B cell (primary cell): ENCODE measurements at regions of chr10 and their contacts with region 1.

Region 1: GRCh38 chr10:103367782-103368518 is at the start of gene TAF5:
- DNase-seq: peak; percentile 95
- ATAC-seq: peak; percentile 71
- H3K4me3 ChIP-seq: peak within 1 kb of the TSS; percentile 59 to 93 (median 88)
- H3K4me3 Mint-ChIP-seq: peak within 1 kb of the TSS; percentile 98
- H3K27ac ChIP-seq: peak within 1 kb of the TSS; percentile 62 to 81
- H3K27ac Mint-ChIP-seq: peak within 1 kb of the TSS; percentile 97
- H3K4me1 ChIP-seq: peaks cover 3 to 16% of the 10 kb centered on the region in 2 donors
- H3K4me1 Mint-ChIP-seq: peaks cover 10% of the 10 kb centered on the region
- H3K27me3 ChIP-seq: no peaks in the 10 kb centered on the region
- H3K27me3 Mint-ChIP-seq: no peaks in the 10 kb centered on the region
- CTCF ChIP-seq: no peak
- total RNA-seq, gene TAF5: 5.5 and 6.5 TPM in 2 replicates

Region 2: GRCh38 chr10:102743588-102744373 is 624.2 kb before region 1 on chr10 and contains the start of gene WBP1L:
- CTCF ChIA-PET with region 1: no interaction called
- POLR2A ChIA-PET with region 1: interaction called, 3 read pairs
- intact Hi-C with region 1: loop called (anchors 10 kb)
- DNase-seq: peak; percentile 98
- ATAC-seq: peak; percentile 95
- H3K4me3 ChIP-seq: peak within 1 kb of the TSS; percentile 70 to 96 (median 89)
- H3K4me3 Mint-ChIP-seq: peak within 1 kb of the TSS; percentile 89
- H3K27ac ChIP-seq: peak within 1 kb of the TSS; percentile 58 to 86
- H3K27ac Mint-ChIP-seq: peak within 1 kb of the TSS; percentile 88
- H3K4me1 ChIP-seq: peaks cover 24 to 25% of the 10 kb centered on the region in 2 donors
- H3K4me1 Mint-ChIP-seq: peaks cover 42% of the 10 kb centered on the region
- H3K27me3 ChIP-seq: peaks cover 0 to 2% (median 0%) of the 10 kb centered on the region in 4 experiments
- H3K27me3 Mint-ChIP-seq: no peaks in the 10 kb centered on the region
- CTCF ChIP-seq: peak; percentile 16
- total RNA-seq, gene WBP1L: 43.2 and 44.3 TPM in 2 replicates

Region 3: GRCh38 chr10:103192451-103193106 is 175.4 kb before region 1 on chr10:
- CTCF ChIA-PET with region 1: no interaction called
- POLR2A ChIA-PET with region 1: no interaction called
- intact Hi-C with region 1: loop called (anchors 1 kb)
- DNase-seq: peak; percentile 75
- ATAC-seq: peak; percentile 56
- H3K4me3 ChIP-seq: peak overlapping the region; percentile 70 to 93 (median 92)
- H3K4me3 Mint-ChIP-seq: peak overlapping the region; percentile 99
- H3K27ac ChIP-seq: peak overlapping the region; percentile 86 to 87
- H3K27ac Mint-ChIP-seq: peak overlapping the region; percentile 98
- H3K4me1 ChIP-seq: peaks cover 20 to 29% of the 10 kb centered on the region in 2 donors
- H3K4me1 Mint-ChIP-seq: peaks cover 40% of the 10 kb centered on the region
- H3K27me3 ChIP-seq: no peaks in the 10 kb centered on the region
- H3K27me3 Mint-ChIP-seq: no peaks in the 10 kb centered on the region
- CTCF ChIP-seq: no peak

Region 4: DNA sequence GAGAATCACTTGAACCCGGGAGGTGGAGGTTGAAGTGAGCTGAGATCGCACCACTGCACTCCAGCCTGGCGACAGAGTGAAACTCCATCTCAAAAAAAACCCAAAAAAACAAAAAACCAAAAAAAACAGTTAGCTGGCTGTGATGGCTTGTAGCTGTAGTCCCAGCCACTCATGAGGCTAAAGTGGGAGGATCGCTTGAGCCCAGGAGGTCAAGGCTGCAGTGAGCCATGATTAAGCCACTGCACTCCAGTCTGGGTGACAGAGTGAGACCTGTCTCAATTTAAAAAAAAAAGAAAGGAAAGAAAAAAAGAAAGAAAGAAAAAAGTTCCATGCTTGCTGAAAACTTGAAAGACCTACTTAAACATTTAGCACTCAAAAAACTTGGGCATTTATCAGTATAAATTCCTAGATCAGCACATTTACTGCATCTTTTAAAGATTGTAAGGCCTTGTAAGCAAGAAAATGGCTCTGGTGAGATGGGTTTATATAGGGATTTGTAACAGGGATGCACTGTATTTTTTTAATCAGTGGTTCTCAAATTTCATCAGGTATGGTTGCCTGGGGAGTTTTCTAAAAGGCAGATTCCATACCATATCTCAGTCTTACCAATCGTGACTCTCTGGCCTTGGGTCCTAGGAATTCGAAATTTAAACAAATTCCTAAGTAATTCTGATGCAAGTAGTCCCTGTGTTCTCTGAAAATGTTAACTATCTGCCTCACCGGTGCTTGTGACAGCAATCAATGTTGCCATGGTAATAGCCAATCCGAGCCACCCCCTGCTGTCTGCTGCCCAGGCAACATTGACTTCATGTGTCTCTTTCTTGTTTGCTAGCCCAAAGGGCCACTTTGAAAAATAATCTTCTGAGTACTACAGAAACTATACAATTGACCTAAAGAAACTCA is 163.3 kb before region 1 on chr10:
- CTCF ChIA-PET with region 1: no interaction called
- POLR2A ChIA-PET with region 1: no interaction called
- intact Hi-C with region 1: no loop called
- DNase-seq: no peak
- ATAC-seq: no peak
- H3K4me3 ChIP-seq: no peak overlapping the region
- H3K4me3 Mint-ChIP-seq: no peak overlapping the region
- H3K27ac ChIP-seq: no peak overlapping the region
- H3K27ac Mint-ChIP-seq: no peak overlapping the region
- H3K4me1 ChIP-seq: no peaks in the 10 kb centered on the region
- H3K4me1 Mint-ChIP-seq: no peaks in the 10 kb centered on the region
- H3K27me3 ChIP-seq: no peaks in the 10 kb centered on the region
- H3K27me3 Mint-ChIP-seq: peaks cover 6% of the 10 kb centered on the region
- CTCF ChIP-seq: no peak

Region 5: DNA sequence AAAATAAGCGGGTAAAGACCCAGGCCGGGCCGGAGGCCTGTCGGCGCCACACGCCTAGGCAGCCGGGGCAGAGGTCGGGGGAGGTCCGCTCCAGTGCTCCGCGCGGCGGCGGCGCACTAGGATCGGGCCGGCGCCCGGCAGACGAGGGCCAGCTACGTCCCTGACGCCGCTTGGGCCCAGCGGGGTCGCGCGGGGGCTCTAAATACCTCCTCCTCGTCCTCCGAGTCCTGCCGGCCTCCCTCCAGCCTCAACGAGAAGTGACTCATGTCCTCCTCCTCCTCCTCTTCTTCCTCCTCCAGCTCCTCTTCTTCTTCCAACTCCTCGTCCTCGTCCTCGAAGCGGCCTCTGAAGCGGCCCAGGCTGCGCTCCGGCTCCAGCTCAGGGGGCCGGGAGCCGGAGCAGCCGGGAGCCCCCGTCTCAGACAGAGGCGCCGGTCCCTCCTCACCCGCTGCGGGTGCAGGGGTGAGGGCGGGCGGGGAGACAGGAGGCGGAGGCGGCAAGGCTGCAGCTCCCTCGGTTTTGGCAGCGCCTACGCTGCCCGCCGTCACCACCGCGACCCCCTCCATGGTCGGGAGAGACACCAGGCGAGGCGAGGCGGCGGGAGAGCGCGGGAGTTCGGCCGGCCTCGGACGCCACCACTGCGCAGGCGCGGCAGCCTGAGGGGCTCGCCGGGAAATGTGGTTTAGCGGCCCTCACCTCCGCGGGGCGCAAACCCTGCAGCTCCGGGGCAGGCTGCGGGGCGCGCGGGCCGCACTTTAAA is 17.3 kb before region 1 on chr10 and contains the start of gene PCGF6:
- CTCF ChIA-PET with region 1: interaction called, 3 read pairs
- POLR2A ChIA-PET with region 1: interaction called, 7 read pairs
- intact Hi-C with region 1: loop called (anchors 1 kb)
- DNase-seq: peak; percentile 86
- ATAC-seq: peak; percentile 86
- H3K4me3 ChIP-seq: peak within 1 kb of the TSS; percentile 71 to 85 (median 80)
- H3K4me3 Mint-ChIP-seq: peak within 1 kb of the TSS; percentile 89
- H3K27ac ChIP-seq: peak within 1 kb of the TSS; percentile 25 to 66
- H3K27ac Mint-ChIP-seq: peak within 1 kb of the TSS; percentile 82
- H3K4me1 ChIP-seq: peaks cover 9 to 13% of the 10 kb centered on the region in 2 donors
- H3K4me1 Mint-ChIP-seq: peaks cover 6% of the 10 kb centered on the region
- H3K27me3 ChIP-seq: no peaks in the 10 kb centered on the region
- H3K27me3 Mint-ChIP-seq: no peaks in the 10 kb centered on the region
- CTCF ChIP-seq: no peak
- total RNA-seq, gene PCGF6: 7.4 and 8.9 TPM in 2 replicates

Region 6: GRCh38 chr10:103396064-103396788 is 28.3 kb after region 1 on chr10 and contains the starts of genes ATP5MK and PDCD11:
- CTCF ChIA-PET with region 1: interaction called, 4 read pairs
- POLR2A ChIA-PET with region 1: interaction called, 8 read pairs
- intact Hi-C with region 1: loop called (anchors 1 kb)
- DNase-seq: peak; percentile 95
- ATAC-seq: peak; percentile 98
- H3K4me3 ChIP-seq: peak within 1 kb of the TSS; percentile 68 to 92 (median 76)
- H3K4me3 Mint-ChIP-seq: peak within 1 kb of the TSS; percentile 97
- H3K27ac ChIP-seq: peak within 1 kb of the TSS; percentile 38 to 64
- H3K27ac Mint-ChIP-seq: peak within 1 kb of the TSS; percentile 89
- H3K4me1 ChIP-seq: peaks cover 22 to 23% of the 10 kb centered on the region in 2 donors
- H3K4me1 Mint-ChIP-seq: peaks cover 44% of the 10 kb centered on the region
- H3K27me3 ChIP-seq: no peaks in the 10 kb centered on the region
- H3K27me3 Mint-ChIP-seq: no peaks in the 10 kb centered on the region
- CTCF ChIP-seq: no peak
- total RNA-seq, gene ATP5MK: 96.6 and 107 TPM in 2 replicates
- total RNA-seq, gene PDCD11: 36.4 and 42.3 TPM in 2 replicates

Region 7: GRCh38 chr10:103470761-103471653 is 103.1 kb after region 1 on chr10:
- CTCF ChIA-PET with region 1: interaction called, 3 read pairs
- POLR2A ChIA-PET with region 1: interaction called, 4 read pairs
- intact Hi-C with region 1: loop called (anchors 1 kb)
- DNase-seq: peak; percentile 85
- ATAC-seq: peak; percentile 78
- H3K4me3 ChIP-seq: peak overlapping the region in 3 of 5 experiments; percentile 15 to 35 (median 31)
- H3K4me3 Mint-ChIP-seq: peak overlapping the region; percentile 79
- H3K27ac ChIP-seq: peak overlapping the region; percentile 69 to 78
- H3K27ac Mint-ChIP-seq: peak overlapping the region; percentile 96
- H3K4me1 ChIP-seq: peaks cover 40 to 70% of the 10 kb centered on the region in 2 donors
- H3K4me1 Mint-ChIP-seq: peaks cover 71% of the 10 kb centered on the region
- H3K27me3 ChIP-seq: no peaks in the 10 kb centered on the region
- H3K27me3 Mint-ChIP-seq: no peaks in the 10 kb centered on the region
- CTCF ChIP-seq: no peak

Region 8: DNA sequence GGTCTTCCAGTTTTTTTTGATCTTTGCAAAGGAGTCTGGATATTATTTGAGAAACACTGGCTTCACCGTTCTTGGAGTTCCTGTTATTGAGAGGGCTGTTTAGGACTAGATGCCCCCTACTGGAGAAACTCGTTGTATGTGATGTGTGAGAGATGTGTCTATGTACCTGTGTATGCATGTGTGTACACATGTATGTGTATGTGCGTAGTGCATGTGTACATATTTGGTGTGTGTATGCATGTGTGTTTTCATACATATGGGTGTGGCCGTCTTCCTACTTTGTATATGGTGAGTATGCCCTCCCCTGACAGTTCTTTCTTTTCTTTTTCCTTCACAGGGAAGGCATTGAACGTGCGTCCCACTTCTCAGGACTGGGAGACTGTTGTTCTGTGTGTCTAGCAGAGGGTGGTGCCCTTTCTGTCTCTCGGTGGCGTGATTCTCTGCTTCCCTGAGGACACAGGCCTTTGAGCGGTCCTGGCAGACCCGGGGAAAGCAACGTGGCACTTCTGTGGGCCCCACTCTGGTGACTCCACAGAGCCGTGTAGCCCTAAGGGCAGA is 114.1 kb after region 1 on chr10:
- CTCF ChIA-PET with region 1: no interaction called
- POLR2A ChIA-PET with region 1: no interaction called
- intact Hi-C with region 1: no loop called
- DNase-seq: peak; percentile 82
- ATAC-seq: peak; percentile 81
- H3K4me3 ChIP-seq: no peak overlapping the region
- H3K4me3 Mint-ChIP-seq: no peak overlapping the region
- H3K27ac ChIP-seq: no peak overlapping the region
- H3K27ac Mint-ChIP-seq: peak overlapping the region; percentile 7
- H3K4me1 ChIP-seq: peaks cover 0 to 13% of the 10 kb centered on the region in 2 donors
- H3K4me1 Mint-ChIP-seq: peaks cover 12% of the 10 kb centered on the region
- H3K27me3 ChIP-seq: no peaks in the 10 kb centered on the region
- H3K27me3 Mint-ChIP-seq: no peaks in the 10 kb centered on the region
- CTCF ChIP-seq: peak; percentile 81

Region 9: GRCh38 chr10:103712570-103713498 is 344.9 kb after region 1 on chr10:
- CTCF ChIA-PET with region 1: no interaction called
- POLR2A ChIA-PET with region 1: no interaction called
- intact Hi-C with region 1: no loop called
- DNase-seq: peak; percentile 84
- ATAC-seq: peak; percentile 92
- H3K4me3 ChIP-seq: no peak overlapping the region
- H3K4me3 Mint-ChIP-seq: no peak overlapping the region
- H3K27ac ChIP-seq: no peak overlapping the region
- H3K27ac Mint-ChIP-seq: no peak overlapping the region
- H3K4me1 ChIP-seq: no peaks in the 10 kb centered on the region
- H3K4me1 Mint-ChIP-seq: no peaks in the 10 kb centered on the region
- H3K27me3 ChIP-seq: no peaks in the 10 kb centered on the region
- H3K27me3 Mint-ChIP-seq: peaks cover 6% of the 10 kb centered on the region
- CTCF ChIP-seq: peak; percentile 94